GM13976 (cell line): ENCODE measurements at regions of chr7 and their contacts with region 1.

Region 1: GRCh38 chr7:140517546-140518369 is 38.5 kb upstream of the MKRN1 start:
- DNase-seq: peak; percentile 88
- CTCF ChIP-seq: peak; percentile 68

Region 2: GRCh38 chr7:139635526-139636302 is 882.0 kb before region 1 on chr7:
- in situ Hi-C with region 1: no loop called
- DNase-seq: no peak
- CTCF ChIP-seq: no peak

Region 3: GRCh38 chr7:139777948-139778841 is 739.6 kb before region 1 on chr7 and contains the start of gene HIPK2:
- in situ Hi-C with region 1: no loop called
- DNase-seq: peak; percentile 90
- CTCF ChIP-seq: no peak

Region 4: GRCh38 chr7:140656548-140657515 is 139.1 kb after region 1 on chr7:
- in situ Hi-C with region 1: loop called (anchors 5 kb)
- DNase-seq: peak; percentile 73
- CTCF ChIP-seq: no peak

Region 5: GRCh38 chr7:141014524-141015395 is 497.0 kb after region 1 on chr7 and contains the start of gene MRPS33:
- in situ Hi-C with region 1: loop called (anchors 25 kb)
- DNase-seq: peak; percentile 95
- CTCF ChIP-seq: peak; percentile 75

Region 6: DNA sequence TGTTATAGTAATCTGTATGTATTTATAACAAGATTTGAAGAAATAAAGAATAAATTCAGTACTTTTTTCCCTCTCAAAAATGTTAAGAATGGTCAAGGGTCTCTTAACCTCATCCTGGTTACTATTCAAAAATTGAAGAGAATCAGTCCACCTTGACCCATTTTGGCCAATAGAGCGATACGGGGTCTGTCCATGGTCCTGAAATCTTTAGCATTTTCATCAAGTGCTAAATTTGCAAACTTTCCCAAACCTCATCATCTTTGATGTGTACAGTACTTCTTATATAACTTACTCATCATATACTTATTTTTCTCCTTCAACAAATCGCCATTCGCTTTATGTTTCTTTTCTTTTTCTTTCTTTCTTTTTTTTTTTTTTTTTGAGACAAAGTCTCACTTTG is 579.7 kb after region 1 on chr7:
- in situ Hi-C with region 1: no loop called
- DNase-seq: peak; percentile 9
- CTCF ChIP-seq: no peak